Heart right ventricle (tissue), 16 donors: ENCODE measurements at regions of chr11 and their contacts with region 1.

Region 1: DNA sequence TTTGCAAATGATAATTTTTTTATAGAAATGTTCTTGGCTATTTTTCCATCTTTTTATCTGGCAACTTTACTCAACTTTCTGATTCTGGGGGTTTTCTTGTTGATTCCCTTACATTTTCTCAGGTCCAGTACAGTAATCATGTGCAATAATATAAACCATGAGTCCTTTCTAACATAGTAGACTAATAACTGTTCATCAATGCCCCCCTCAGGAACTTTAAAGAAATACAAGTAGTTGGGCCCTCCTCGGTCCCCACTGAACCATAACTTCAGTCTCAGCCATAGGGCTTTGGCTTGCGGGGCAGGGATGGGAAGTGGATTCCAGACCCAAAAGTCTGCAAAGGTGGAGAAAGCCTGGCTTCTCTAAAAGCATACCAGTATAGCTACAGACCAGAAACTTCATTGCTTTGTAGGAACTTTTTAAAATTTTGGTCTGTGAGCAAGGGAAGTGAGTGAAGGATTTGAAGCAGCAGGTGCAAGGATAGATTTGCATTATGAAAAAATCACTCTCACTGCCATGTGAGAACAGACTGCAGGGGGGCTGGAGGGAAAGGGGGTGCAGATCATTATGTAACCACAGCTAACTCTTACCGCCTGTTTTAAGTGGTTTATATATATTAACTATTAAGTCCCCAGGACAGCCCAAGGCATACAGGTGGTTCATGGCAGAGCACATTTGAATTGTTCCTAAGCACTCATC is 10.4 kb upstream of the TUB start:
- DNase-seq: no peak
- ATAC-seq: peak in 5 of 8 donors; percentile 34 to 53 (median 45)
- H3K4me3 ChIP-seq: no peak overlapping the region
- H3K27ac ChIP-seq: no peak overlapping the region
- H3K4me1 ChIP-seq: peaks cover 13 to 47% (median 41%) of the 10 kb centered on the region in 9 donors
- H3K27me3 ChIP-seq: no peaks in the 10 kb centered on the region
- CTCF ChIP-seq: peak in 8 of 9 donors; percentile 16 to 60 (median 47)

Region 2: GRCh38 chr11:8087185-8087584 is 16.6 kb after region 1 on chr11:
- intact Hi-C with region 1: loop called in 1 of 10 experiments (anchors 2 kb)
- DNase-seq: no peak
- ATAC-seq: peak in 2 of 8 donors; percentile 16 to 25
- H3K4me3 ChIP-seq: no peak overlapping the region
- H3K27ac ChIP-seq: no peak overlapping the region
- H3K4me1 ChIP-seq: peaks cover 0 to 56% (median 45%) of the 10 kb centered on the region in 9 donors
- H3K27me3 ChIP-seq: no peaks in the 10 kb centered on the region
- CTCF ChIP-seq: peak in 6 of 9 donors; percentile 6 to 36 (median 19)